PC-9 (cell line): ENCODE measurements at regions of chr3 and their contacts with region 1.

Region 1: DNA sequence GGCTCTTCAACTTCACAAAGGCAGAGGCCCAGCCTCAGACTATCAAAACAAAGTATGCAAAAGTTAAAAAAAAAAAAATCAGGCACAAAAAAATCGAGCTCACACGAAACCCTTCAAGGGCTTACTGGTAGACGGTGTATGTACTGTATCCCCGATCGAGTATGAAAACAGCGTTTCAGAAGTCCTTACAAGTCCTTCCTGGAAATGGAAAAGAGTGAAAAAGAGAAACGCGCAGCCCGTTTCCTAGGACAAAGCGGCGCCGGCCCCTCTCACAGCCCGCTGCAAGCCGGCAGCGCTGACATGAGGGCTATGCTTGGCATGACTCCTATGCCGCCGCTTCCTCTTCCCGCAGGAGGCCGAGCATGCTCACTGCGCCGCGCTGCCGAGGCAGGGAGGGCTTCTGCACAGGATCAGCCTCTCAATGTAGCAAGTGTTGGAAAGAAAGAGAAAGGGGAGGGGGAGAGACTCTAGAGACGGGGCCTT is at the start of gene VGLL4:
- DNase-seq: peak; percentile 71 to 73
- H3K4me3 ChIP-seq: peak within 1 kb of the TSS; percentile 77
- H3K27ac ChIP-seq: peak within 1 kb of the TSS; percentile 66
- H3K4me1 ChIP-seq: peaks cover 25% of the 10 kb centered on the region
- H3K27me3 ChIP-seq: no peaks in the 10 kb centered on the region
- CTCF ChIP-seq: no peak
- total RNA-seq, gene VGLL4: 39.1 and 42.2 TPM in 2 replicates

Region 2: GRCh38 chr3:11548721-11549131 is 94.9 kb before region 1 on chr3:
- CTCF ChIA-PET with region 1: interaction called, 5 read pairs
- POLR2A ChIA-PET with region 1: no interaction called
- intact Hi-C with region 1: loop called (anchors 5 kb)
- DNase-seq: peak in 1 of 2 experiments; percentile 75
- H3K4me3 ChIP-seq: no peak overlapping the region
- H3K27ac ChIP-seq: no peak overlapping the region; the same call in 1 of the 2 replicates
- H3K4me1 ChIP-seq: no peaks in the 10 kb centered on the region
- H3K27me3 ChIP-seq: no peaks in the 10 kb centered on the region
- CTCF ChIP-seq: no peak

Region 3: GRCh38 chr3:11568503-11569155 is 75.0 kb before region 1 on chr3:
- CTCF ChIA-PET with region 1: interaction called, 7 read pairs
- POLR2A ChIA-PET with region 1: no interaction called
- intact Hi-C with region 1: loop called (anchors 5 kb)
- DNase-seq: peak; percentile 51 to 52
- H3K4me3 ChIP-seq: peak overlapping the region; percentile 30; the same call in 1 of the 2 replicates
- H3K27ac ChIP-seq: peak overlapping the region; percentile 96
- H3K4me1 ChIP-seq: peaks cover 34% of the 10 kb centered on the region
- H3K27me3 ChIP-seq: no peaks in the 10 kb centered on the region
- CTCF ChIP-seq: no peak

Region 4: DNA sequence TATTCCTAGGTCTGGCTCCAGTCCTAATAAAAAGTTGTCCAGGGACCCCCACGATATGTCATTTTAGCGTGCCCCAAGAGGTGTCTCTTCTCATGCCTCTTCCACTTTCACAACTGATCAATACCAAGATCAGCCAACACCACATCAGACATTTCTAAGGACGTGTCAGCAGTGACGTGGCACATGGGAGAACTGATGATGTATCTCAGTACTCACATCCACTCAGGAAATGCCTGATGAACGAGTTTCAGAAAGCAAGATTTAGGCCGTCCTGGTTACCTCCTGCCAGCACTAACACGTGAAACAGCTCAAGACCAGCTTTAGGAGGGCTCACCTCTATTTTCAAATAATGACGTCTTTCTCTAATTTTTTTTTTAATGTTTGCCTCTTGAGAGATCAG is 19.5 kb before region 1 on chr3:
- CTCF ChIA-PET with region 1: no interaction called
- POLR2A ChIA-PET with region 1: interaction called, 24 read pairs
- intact Hi-C with region 1: no loop called
- DNase-seq: no peak
- H3K4me3 ChIP-seq: no peak overlapping the region
- H3K27ac ChIP-seq: no peak overlapping the region
- H3K4me1 ChIP-seq: no peaks in the 10 kb centered on the region; the same call in 1 of the 2 replicates
- H3K27me3 ChIP-seq: no peaks in the 10 kb centered on the region
- CTCF ChIP-seq: no peak

Region 5: GRCh38 chr3:13301286-13301987 is 1657.8 kb after region 1 on chr3:
- CTCF ChIA-PET with region 1: no interaction called
- POLR2A ChIA-PET with region 1: no interaction called
- intact Hi-C with region 1: no loop called
- DNase-seq: peak; percentile 34 to 60
- H3K4me3 ChIP-seq: no peak overlapping the region
- H3K27ac ChIP-seq: no peak overlapping the region
- H3K4me1 ChIP-seq: peaks cover 12% of the 10 kb centered on the region; the same call in 1 of the 2 replicates
- H3K27me3 ChIP-seq: no peaks in the 10 kb centered on the region
- CTCF ChIP-seq: no peak